CD4-positive, alpha-beta memory T cell (primary cell): ENCODE measurements at regions of chr1 and their contacts with region 1.

Region 1: GRCh38 chr1:206496131-206496793 is 11.1 kb upstream of the RASSF5 start:
- DNase-seq: no peak
- H3K4me3 ChIP-seq: no peak overlapping the region
- H3K4me3 Mint-ChIP-seq: no peak overlapping the region
- H3K27ac ChIP-seq: no peak overlapping the region
- H3K27ac Mint-ChIP-seq: peak overlapping the region; percentile 31 to 91 (median 68)
- H3K4me1 ChIP-seq: peaks cover 5% of the 10 kb centered on the region
- H3K4me1 Mint-ChIP-seq: peaks cover 0 to 15% (median 4%) of the 10 kb centered on the region in 4 donors
- H3K27me3 ChIP-seq: no peaks in the 10 kb centered on the region
- H3K27me3 Mint-ChIP-seq: no peaks in the 10 kb centered on the region

Region 2: DNA sequence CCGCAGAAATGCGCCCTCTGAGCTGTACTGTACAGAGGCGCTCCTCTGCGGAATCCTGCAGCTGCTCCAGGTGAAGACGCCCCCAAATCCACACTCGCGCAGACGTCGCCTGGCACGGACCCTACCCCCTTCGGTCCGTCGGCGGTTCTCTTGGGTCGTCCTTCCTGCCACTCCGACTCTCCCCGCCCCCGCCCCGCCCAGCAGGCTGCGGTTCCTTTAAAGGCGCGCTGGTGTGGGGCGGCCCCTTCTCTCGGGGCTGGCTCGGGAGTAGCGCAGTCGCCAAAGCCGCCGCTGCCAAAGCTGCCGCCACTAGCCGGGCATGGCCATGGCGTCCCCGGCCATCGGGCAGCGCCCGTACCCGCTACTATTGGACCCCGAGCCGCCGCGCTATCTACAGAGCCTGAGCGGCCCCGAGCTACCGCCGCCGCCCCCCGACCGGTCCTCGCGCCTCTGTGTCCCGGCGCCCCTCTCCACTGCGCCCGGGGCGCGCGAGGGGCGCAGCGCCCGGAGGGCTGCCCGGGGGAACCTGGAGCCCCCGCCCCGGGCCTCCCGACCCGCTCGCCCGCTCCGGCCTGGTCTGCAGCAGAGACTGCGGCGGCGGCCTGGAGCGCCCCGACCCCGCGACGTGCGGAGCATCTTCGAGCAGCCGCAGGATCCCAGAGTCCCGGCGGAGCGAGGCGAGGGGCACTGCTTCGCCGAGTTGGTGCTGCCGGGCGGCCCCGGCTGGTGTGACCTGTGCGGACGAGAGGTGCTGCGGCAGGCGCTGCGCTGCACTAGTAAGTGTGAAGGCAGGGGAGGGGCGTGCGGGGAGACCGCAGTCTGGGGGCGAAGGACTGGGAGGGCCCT is 11.2 kb after region 1 on chr1 and contains the start of gene RASSF5:
- CTCF ChIA-PET with region 1: interaction called, 6 read pairs
- POLR2A ChIA-PET with region 1: interaction called, 30 read pairs
- intact Hi-C with region 1: no loop called
- DNase-seq: peak; percentile 76 to 81 (median 78)
- H3K4me3 ChIP-seq: peak within 1 kb of the TSS; percentile 39 to 58
- H3K4me3 Mint-ChIP-seq: peak within 1 kb of the TSS; percentile 80 to 89 (median 82)
- H3K27ac ChIP-seq: no peak within 1 kb of the TSS
- H3K27ac Mint-ChIP-seq: peak within 1 kb of the TSS in 4 of 7 donors; percentile 54 to 67 (median 64)
- H3K4me1 ChIP-seq: peaks cover 45% of the 10 kb centered on the region
- H3K4me1 Mint-ChIP-seq: peaks cover 17 to 55% (median 34%) of the 10 kb centered on the region in 4 donors
- H3K27me3 ChIP-seq: peaks cover 4% of the 10 kb centered on the region
- H3K27me3 Mint-ChIP-seq: peaks cover 6 to 8% of the 10 kb centered on the region in 2 donors
- total RNA-seq, gene RASSF5: 186 to 190 TPM